ENCODE measurements at regions of chr5 and their contacts with region 1.

Region 1: GRCh38 chr5:55324815-55325418 is 17.1 kb downstream of the MTREX start:
- DNase-seq: peak; percentile 58
- ATAC-seq: peak; percentile 83
- H3K4me3 ChIP-seq: no peak overlapping the region
- H3K27ac ChIP-seq: no peak overlapping the region
- H3K4me1 ChIP-seq: no peaks in the 10 kb centered on the region
- H3K27me3 ChIP-seq: no peaks in the 10 kb centered on the region
- CTCF ChIP-seq: peak; percentile 69
- POLR2A ChIP-seq: no peak
- RAD21 ChIP-seq: peak; percentile 72

Region 2: DNA sequence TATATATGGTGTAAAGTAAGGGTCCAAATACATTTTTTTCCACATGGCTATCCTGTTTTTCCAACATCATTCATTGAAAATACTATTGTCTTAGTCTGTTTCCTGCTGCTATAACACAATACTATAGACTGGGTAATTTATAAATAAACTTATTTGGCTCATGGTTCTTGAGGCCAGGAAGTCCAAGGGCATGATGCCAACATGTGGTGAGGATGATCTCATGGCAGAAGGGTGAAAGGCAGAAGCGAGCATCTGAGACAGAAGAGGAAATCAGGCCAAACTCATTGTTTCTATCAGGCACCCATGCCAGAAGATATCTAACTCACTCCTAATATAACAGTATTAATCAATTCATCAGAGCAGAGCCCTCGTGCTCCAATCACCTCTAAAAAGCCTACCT is 865.6 kb after region 1 on chr5:
- CTCF ChIA-PET with region 1: no interaction called
- POLR2A ChIA-PET with region 1: no interaction called
- dilution Hi-C with region 1: no loop called
- in situ Hi-C with region 1: no loop called
- intact Hi-C with region 1: loop called (anchors 10 kb)
- DNase-seq: peak; percentile 80
- ATAC-seq: no peak
- H3K4me3 ChIP-seq: no peak overlapping the region
- H3K27ac ChIP-seq: no peak overlapping the region
- H3K4me1 ChIP-seq: peaks cover 2% of the 10 kb centered on the region
- H3K27me3 ChIP-seq: no peaks in the 10 kb centered on the region
- CTCF ChIP-seq: no peak
- POLR2A ChIP-seq: no peak
- RAD21 ChIP-seq: no peak

Measured in IMR-90 (cell line).